Breast epithelium (tissue), 4 donors: ENCODE measurements at regions of chr20 and their contacts with region 1.

Region 1: DNA sequence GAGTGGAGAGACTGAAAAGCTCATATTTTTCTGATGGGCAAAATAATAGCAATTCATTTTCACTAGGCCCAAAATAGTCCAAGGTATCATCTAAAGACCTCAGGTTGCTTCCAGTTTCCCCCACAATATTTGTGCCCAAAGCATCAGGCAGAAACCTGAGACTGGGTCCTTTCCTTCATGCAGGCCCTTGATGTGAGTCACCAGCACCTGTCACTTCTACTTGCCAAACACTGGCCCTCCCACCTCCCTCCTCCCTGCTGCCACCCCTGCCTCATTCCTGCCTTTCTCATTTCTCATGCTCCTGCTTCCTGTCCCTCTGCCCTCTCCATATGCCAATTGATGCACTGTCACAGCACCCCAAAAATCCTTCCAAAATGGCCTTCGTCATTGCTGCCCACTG is 230.4 kb upstream of the CST7 start:
- DNase-seq: no peak
- H3K4me3 ChIP-seq: no peak overlapping the region
- H3K27ac ChIP-seq: no peak overlapping the region
- H3K4me1 ChIP-seq: no peaks in the 10 kb centered on the region
- H3K27me3 ChIP-seq: no peaks in the 10 kb centered on the region
- CTCF ChIP-seq: no peak
- POLR2A ChIP-seq: no peak

Region 2: DNA sequence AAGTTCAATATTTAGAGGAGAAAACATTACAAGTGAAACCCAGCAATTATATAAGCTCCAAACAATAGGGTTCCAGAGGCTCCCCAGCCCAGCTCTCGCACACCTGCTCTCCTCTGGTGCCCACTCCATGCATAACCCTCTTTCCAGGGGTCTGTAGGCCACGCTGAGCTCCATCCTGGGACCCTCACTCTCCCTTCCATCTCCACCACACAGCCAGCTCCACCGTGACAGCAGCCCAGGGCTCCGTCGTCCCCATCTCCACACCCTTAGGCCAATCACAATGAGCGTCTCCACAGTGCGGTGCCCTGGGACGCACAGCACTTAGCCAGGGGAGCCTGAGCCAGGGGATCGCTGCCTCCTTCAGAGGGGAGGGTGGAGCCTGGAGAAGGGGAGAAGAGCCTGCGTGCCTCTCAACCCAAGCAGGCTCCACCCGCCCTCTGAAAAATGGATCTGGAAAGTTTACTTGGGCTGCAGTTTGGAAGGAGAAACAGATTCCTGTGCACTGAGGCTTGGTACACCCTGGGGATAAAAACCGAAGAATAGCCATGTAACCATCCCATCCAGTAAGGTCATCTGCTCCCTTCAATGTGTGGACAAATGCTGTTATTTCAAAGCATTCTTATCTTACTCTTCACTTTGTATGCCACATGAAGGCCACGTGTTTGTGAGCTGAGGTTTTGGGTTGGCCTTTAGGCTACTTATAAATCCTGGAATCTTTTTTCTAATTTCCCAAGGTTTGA is 657.7 kb before region 1 on chr20:
- intact Hi-C with region 1: loop called (anchors 5 kb)
- DNase-seq: no peak
- H3K4me3 ChIP-seq: no peak overlapping the region
- H3K27ac ChIP-seq: no peak overlapping the region
- H3K4me1 ChIP-seq: no peaks in the 10 kb centered on the region
- H3K27me3 ChIP-seq: no peaks in the 10 kb centered on the region
- CTCF ChIP-seq: no peak
- POLR2A ChIP-seq: no peak

Region 3: GRCh38 chr20:24432046-24432442 is 286.7 kb before region 1 on chr20:
- intact Hi-C with region 1: no loop called
- DNase-seq: no peak
- H3K4me3 ChIP-seq: no peak overlapping the region
- H3K27ac ChIP-seq: no peak overlapping the region
- H3K4me1 ChIP-seq: no peaks in the 10 kb centered on the region
- H3K27me3 ChIP-seq: peaks cover 0 to 7% of the 10 kb centered on the region in 2 donors
- CTCF ChIP-seq: no peak
- POLR2A ChIP-seq: no peak

Region 4: GRCh38 chr20:24732076-24732475 is 13.4 kb after region 1 on chr20:
- intact Hi-C with region 1: no loop called
- DNase-seq: no peak
- H3K4me3 ChIP-seq: no peak overlapping the region
- H3K27ac ChIP-seq: no peak overlapping the region
- H3K4me1 ChIP-seq: no peaks in the 10 kb centered on the region
- H3K27me3 ChIP-seq: no peaks in the 10 kb centered on the region
- CTCF ChIP-seq: no peak
- POLR2A ChIP-seq: no peak